Endothelial cell of umbilical vein (primary cell): ENCODE measurements at regions of chr1 and their contacts with region 1.

Region 1: GRCh38 chr1:214551436-214552173 is at the start of gene PTPN14:
- DNase-seq: peak; percentile 93
- H3K4me3 ChIP-seq: peak within 1 kb of the TSS; percentile 31 to 88 (median 73)
- H3K27ac ChIP-seq: peak within 1 kb of the TSS; percentile 98
- H3K4me1 ChIP-seq: peaks cover 50% of the 10 kb centered on the region
- H3K27me3 ChIP-seq: no peaks in the 10 kb centered on the region
- CTCF ChIP-seq: peak; percentile 17 to 47
- POLR2A ChIP-seq: peak; percentile 97
- total RNA-seq, gene PTPN14: 88.9 and 93.0 TPM in 2 replicates

Region 2: DNA sequence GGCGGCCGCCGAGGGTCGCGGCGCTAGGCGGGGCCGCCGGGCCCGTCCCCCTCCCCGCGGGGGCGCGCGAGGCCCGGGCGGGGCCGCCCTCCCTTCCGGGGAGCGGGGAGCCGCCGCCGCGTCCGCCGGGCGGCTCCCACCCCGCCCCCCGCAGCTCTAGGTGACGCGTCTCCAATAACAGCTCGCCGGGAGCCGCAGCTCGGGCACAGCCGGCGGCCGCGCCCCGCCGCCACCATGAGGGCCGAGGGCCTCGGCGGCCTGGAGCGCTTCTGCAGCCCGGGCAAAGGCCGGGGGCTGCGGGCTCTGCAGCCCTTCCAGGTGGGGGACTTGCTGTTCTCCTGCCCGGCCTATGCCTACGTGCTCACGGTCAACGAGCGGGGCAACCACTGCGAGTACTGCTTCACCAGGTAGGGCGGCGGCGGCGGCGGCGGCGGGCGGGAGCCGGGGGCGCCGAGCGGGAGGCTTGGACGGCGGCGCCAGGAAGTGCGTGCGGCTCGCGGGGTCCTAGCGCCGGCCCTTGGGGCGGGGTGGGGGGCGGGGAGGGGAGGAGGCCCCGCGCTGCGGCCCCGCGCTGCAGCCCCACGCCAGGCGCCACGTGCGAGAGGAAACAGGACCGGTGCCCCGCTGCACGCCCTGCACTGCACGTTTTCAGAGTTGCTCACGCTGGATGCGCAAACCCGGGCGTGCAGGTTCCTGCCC is 270.4 kb before region 1 on chr1 and contains the start of gene SMYD2:
- CTCF ChIA-PET with region 1: no interaction called
- POLR2A ChIA-PET with region 1: no interaction called
- dilution Hi-C with region 1: no loop called
- intact Hi-C with region 1: loop called (anchors 1 kb)
- DNase-seq: peak; percentile 56
- H3K4me3 ChIP-seq: peak within 1 kb of the TSS; percentile 66 to 79 (median 77)
- H3K27ac ChIP-seq: peak within 1 kb of the TSS; percentile 59
- H3K4me1 ChIP-seq: peaks cover 4% of the 10 kb centered on the region
- H3K27me3 ChIP-seq: no peaks in the 10 kb centered on the region
- CTCF ChIP-seq: no peak
- POLR2A ChIP-seq: peak; percentile 78
- total RNA-seq, gene SMYD2: 20.9 and 22.0 TPM in 2 replicates

Region 3: DNA sequence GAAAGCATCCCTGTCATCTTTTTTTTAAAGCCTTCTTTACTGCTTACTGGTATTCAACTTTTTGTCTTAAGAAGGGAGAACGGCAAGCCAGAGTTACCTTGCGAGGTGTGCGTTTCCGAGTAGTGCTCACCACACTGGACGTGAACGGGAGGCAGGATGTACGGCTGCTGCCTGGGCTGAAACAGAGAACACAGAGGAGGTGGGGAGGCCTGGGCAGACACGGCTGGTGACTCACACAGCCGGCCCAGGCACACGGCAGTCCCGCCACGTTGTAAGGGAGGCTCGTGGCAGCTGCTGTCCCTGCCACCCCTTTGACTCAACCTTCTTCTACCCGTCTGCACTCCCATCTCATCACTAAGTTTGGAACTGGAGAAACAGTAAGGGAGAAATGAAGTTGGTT is 164.9 kb before region 1 on chr1:
- CTCF ChIA-PET with region 1: interaction called, 59 read pairs
- POLR2A ChIA-PET with region 1: no interaction called
- dilution Hi-C with region 1: no loop called
- intact Hi-C with region 1: loop called (anchors 1 kb)
- DNase-seq: no peak
- H3K4me3 ChIP-seq: no peak overlapping the region
- H3K27ac ChIP-seq: no peak overlapping the region
- H3K4me1 ChIP-seq: no peaks in the 10 kb centered on the region
- H3K27me3 ChIP-seq: no peaks in the 10 kb centered on the region
- CTCF ChIP-seq: no peak
- POLR2A ChIP-seq: no peak

Region 4: DNA sequence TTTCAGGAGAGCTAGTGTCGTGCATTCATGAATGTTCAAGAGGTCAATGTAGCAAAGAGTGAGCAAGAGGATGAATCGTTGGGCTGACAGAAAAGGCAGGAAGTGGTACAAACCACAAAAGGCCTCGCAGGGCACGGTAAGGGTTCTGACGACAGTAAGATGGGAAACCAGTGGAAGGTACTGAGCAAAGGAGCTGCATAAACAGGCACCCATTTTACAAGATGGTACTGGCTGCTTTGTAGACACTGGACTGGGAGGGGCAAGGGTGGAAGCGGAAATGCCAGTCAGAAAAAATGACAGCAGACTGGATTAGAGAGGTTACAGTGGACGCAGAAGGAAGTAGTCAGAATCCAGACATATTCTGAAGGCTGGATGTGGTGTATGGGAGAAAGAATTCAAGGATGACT is 123.7 kb before region 1 on chr1:
- CTCF ChIA-PET with region 1: interaction called, 5 read pairs
- POLR2A ChIA-PET with region 1: interaction called, 9 read pairs
- dilution Hi-C with region 1: no loop called
- intact Hi-C with region 1: loop called (anchors 1 kb)
- DNase-seq: peak; percentile 81
- H3K4me3 ChIP-seq: no peak overlapping the region
- H3K27ac ChIP-seq: peak overlapping the region; percentile 68
- H3K4me1 ChIP-seq: peaks cover 39% of the 10 kb centered on the region
- H3K27me3 ChIP-seq: no peaks in the 10 kb centered on the region
- CTCF ChIP-seq: no peak
- POLR2A ChIP-seq: peak; percentile 39

Region 5: GRCh38 chr1:214454619-214455396 is 96.8 kb before region 1 on chr1:
- CTCF ChIA-PET with region 1: interaction called, 5 read pairs
- POLR2A ChIA-PET with region 1: interaction called, 3 read pairs
- dilution Hi-C with region 1: no loop called
- intact Hi-C with region 1: loop called (anchors 1 kb)
- DNase-seq: peak; percentile 87
- H3K4me3 ChIP-seq: peak overlapping the region in 1 of 3 experiments; percentile 15
- H3K27ac ChIP-seq: peak overlapping the region; percentile 94
- H3K4me1 ChIP-seq: peaks cover 65% of the 10 kb centered on the region
- H3K27me3 ChIP-seq: no peaks in the 10 kb centered on the region
- CTCF ChIP-seq: no peak
- POLR2A ChIP-seq: peak; percentile 56

Region 6: GRCh38 chr1:214566158-214567104 is 14.8 kb after region 1 on chr1:
- CTCF ChIA-PET with region 1: interaction called, 40 read pairs
- POLR2A ChIA-PET with region 1: interaction called, 10 read pairs
- dilution Hi-C with region 1: no loop called
- intact Hi-C with region 1: no loop called
- DNase-seq: peak; percentile 67
- H3K4me3 ChIP-seq: no peak overlapping the region
- H3K27ac ChIP-seq: peak overlapping the region; percentile 33
- H3K4me1 ChIP-seq: peaks cover 48% of the 10 kb centered on the region
- H3K27me3 ChIP-seq: no peaks in the 10 kb centered on the region
- CTCF ChIP-seq: no peak
- POLR2A ChIP-seq: no peak